CD8-positive, alpha-beta T cell (primary cell): ENCODE measurements at regions of chr17 and their contacts with region 1.

Region 1: DNA sequence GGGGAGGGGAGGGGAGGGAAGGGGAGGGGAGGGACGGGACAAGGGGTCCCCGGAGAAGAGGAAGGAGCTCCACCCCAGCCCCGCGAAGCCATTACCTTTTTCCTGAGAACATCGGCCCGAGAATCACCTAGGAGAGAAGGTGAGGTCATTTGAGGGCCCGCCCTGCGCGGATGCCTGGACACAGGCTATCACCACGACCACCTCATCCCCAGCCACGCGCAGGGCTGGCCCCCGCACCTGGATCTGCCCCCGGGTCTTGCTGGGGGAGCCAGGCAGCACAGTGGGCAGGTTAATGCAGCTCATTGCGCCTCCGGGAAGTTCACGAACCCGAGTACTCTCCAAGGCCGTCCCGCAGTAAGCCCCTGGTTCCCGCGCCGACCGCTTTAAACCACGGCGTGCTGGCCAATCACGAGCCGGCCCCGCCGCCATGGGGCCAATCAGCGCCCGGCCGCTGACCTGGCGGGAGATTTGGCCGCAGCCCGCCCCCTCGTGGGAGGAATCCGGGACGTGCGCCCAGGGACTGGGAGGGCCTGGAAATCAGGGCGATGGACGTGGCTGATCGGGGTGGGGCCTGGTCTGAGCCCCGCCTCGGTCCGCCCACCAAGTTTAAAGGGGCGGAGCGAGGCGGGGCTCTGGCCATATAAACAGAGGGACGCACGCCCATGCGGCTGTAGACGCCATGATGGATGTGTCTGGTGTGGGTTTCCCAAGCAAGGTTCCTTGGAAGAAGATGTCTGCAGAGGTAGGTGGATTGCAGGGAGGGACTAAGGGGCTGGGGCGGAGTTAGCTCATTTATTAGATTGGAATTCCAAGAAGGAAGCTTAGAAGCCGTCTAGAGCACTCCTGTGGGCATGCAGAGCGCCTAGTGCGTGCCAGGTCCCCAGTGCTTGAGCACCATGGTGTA is at the starts of genes AFMID and TK1:
- DNase-seq: peak; percentile 57 to 85 (median 72)
- ATAC-seq: peak; percentile 91
- H3K4me3 ChIP-seq: peak within 1 kb of the TSS; percentile 48 to 73
- H3K4me3 Mint-ChIP-seq: peak within 1 kb of the TSS; percentile 85
- H3K27ac ChIP-seq: no peak within 1 kb of the TSS
- H3K27ac Mint-ChIP-seq: no peak within 1 kb of the TSS
- H3K4me1 ChIP-seq: peaks cover 6% of the 10 kb centered on the region
- H3K4me1 Mint-ChIP-seq: peaks cover 9% of the 10 kb centered on the region
- H3K27me3 ChIP-seq: no peaks in the 10 kb centered on the region
- H3K27me3 Mint-ChIP-seq: no peaks in the 10 kb centered on the region
- CTCF ChIP-seq: no peak
- total RNA-seq, gene AFMID: 0.65 to 0.92 TPM
- total RNA-seq, gene TK1: 0.76 to 1.1 TPM

Region 2: GRCh38 chr17:78089576-78090281 is 97.2 kb before region 1 on chr17:
- CTCF ChIA-PET with region 1: interaction called, 11 read pairs
- POLR2A ChIA-PET with region 1: interaction called, 3 read pairs
- intact Hi-C with region 1: no loop called
- DNase-seq: no peak
- ATAC-seq: no peak
- H3K4me3 ChIP-seq: no peak overlapping the region
- H3K4me3 Mint-ChIP-seq: no peak overlapping the region
- H3K27ac ChIP-seq: no peak overlapping the region
- H3K27ac Mint-ChIP-seq: peak overlapping the region; percentile 46
- H3K4me1 ChIP-seq: no peaks in the 10 kb centered on the region
- H3K4me1 Mint-ChIP-seq: peaks cover 3% of the 10 kb centered on the region
- H3K27me3 ChIP-seq: no peaks in the 10 kb centered on the region
- H3K27me3 Mint-ChIP-seq: no peaks in the 10 kb centered on the region
- CTCF ChIP-seq: no peak

Region 3: GRCh38 chr17:78140169-78140976 is 46.6 kb before region 1 on chr17:
- CTCF ChIA-PET with region 1: no interaction called
- POLR2A ChIA-PET with region 1: interaction called, 3 read pairs
- intact Hi-C with region 1: loop called in 1 of 2 experiments (anchors 1 kb)
- DNase-seq: peak; percentile 83 to 96 (median 93)
- ATAC-seq: peak; percentile 88
- H3K4me3 ChIP-seq: peak overlapping the region in 1 of 2 experiments; percentile 20
- H3K4me3 Mint-ChIP-seq: peak overlapping the region; percentile 61
- H3K27ac ChIP-seq: peak overlapping the region; percentile 16 to 51
- H3K27ac Mint-ChIP-seq: peak overlapping the region; percentile 91
- H3K4me1 ChIP-seq: peaks cover 81% of the 10 kb centered on the region
- H3K4me1 Mint-ChIP-seq: peaks cover 70% of the 10 kb centered on the region
- H3K27me3 ChIP-seq: no peaks in the 10 kb centered on the region
- H3K27me3 Mint-ChIP-seq: no peaks in the 10 kb centered on the region
- CTCF ChIP-seq: no peak

Region 4: DNA sequence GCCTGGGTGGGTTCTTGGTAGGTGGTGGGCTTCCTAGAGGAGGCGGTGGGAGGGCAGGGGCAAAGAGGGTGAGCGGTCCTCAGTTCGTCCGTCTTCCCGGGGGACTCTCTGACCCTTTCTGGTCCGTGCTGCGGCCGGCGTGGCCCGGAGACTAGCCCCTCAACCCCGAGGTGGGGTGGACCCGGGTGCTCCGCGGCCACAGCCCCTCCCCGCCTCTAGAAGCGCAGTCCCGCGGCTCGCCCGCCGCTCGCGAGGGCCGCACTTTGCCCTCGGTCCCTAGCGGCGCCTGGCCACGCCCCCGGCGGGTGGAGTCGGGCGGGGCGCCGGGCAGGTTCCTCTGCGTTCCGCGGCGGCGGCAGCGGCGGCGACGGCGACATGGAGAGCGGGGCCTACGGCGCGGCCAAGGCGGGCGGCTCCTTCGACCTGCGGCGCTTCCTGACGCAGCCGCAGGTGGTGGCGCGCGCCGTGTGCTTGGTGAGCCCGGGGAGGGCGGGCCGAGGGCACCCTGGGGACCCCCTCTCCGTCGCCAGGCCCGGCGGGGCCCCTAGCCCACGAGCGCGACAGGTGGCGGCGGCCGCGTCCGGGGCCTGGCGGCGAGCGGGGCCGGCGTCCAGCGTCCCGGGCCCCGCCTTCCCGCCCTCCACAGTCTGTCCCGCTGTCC is 18.6 kb before region 1 on chr17 and contains the start of gene SYNGR2:
- CTCF ChIA-PET with region 1: no interaction called
- POLR2A ChIA-PET with region 1: no interaction called
- intact Hi-C with region 1: loop called (anchors 1 to 2 kb)
- DNase-seq: peak; percentile 74 to 93 (median 86)
- ATAC-seq: peak; percentile 89
- H3K4me3 ChIP-seq: peak within 1 kb of the TSS; percentile 52 to 59
- H3K4me3 Mint-ChIP-seq: peak within 1 kb of the TSS; percentile 69
- H3K27ac ChIP-seq: peak within 1 kb of the TSS; percentile 52 to 73
- H3K27ac Mint-ChIP-seq: peak within 1 kb of the TSS; percentile 79
- H3K4me1 ChIP-seq: peaks cover 30% of the 10 kb centered on the region
- H3K4me1 Mint-ChIP-seq: peaks cover 36% of the 10 kb centered on the region
- H3K27me3 ChIP-seq: no peaks in the 10 kb centered on the region
- H3K27me3 Mint-ChIP-seq: no peaks in the 10 kb centered on the region
- CTCF ChIP-seq: no peak
- total RNA-seq, gene SYNGR2: 36.4 to 36.7 TPM

Region 5: GRCh38 chr17:78214706-78215061 is 27.7 kb after region 1 on chr17:
- CTCF ChIA-PET with region 1: no interaction called
- POLR2A ChIA-PET with region 1: no interaction called
- intact Hi-C with region 1: loop called in 1 of 2 experiments (anchors 1 kb)
- DNase-seq: no peak
- ATAC-seq: no peak
- H3K4me3 ChIP-seq: peak overlapping the region; percentile 48 to 52
- H3K4me3 Mint-ChIP-seq: peak overlapping the region; percentile 70
- H3K27ac ChIP-seq: no peak overlapping the region
- H3K27ac Mint-ChIP-seq: no peak overlapping the region
- H3K4me1 ChIP-seq: peaks cover 7% of the 10 kb centered on the region
- H3K4me1 Mint-ChIP-seq: peaks cover 6% of the 10 kb centered on the region
- H3K27me3 ChIP-seq: no peaks in the 10 kb centered on the region
- H3K27me3 Mint-ChIP-seq: no peaks in the 10 kb centered on the region
- CTCF ChIP-seq: no peak